HEK293 (cell line): ENCODE measurements at regions of chr3 and their contacts with region 1.

Region 1: DNA sequence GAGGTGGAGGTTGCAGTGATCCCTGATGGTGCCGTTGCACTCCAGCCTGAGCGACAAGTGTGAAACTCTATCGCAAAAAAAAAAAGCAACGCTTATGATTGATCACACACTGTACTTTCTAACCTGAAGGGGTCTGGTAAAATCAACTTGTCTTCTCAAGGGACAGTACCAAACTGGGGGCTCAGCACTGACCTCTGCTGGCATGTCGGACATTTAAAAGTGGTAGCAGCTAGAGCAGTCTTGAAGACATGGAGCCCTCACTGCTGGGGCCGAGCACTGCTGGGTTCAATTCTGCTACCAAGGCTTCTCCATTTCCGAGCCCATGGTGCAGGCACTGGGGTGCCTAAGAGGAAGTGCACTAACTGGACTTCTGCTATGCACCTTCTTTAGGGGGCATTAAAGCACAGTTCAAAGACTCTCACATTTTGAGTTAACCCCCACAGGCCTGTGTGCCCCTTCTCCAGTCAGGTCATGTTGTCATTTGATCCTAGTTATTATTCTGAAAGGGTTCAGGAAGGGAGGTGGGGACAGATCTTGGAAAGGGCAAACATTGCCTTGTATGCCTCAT is 26.4 kb upstream of the LAMP3 start:
- H3K4me3 ChIP-seq: no peak overlapping the region
- H3K27ac ChIP-seq: no peak overlapping the region
- H3K4me1 ChIP-seq: no peaks in the 10 kb centered on the region; the same call in 1 of the 2 replicates
- CTCF ChIP-seq: no peak

Region 2: DNA sequence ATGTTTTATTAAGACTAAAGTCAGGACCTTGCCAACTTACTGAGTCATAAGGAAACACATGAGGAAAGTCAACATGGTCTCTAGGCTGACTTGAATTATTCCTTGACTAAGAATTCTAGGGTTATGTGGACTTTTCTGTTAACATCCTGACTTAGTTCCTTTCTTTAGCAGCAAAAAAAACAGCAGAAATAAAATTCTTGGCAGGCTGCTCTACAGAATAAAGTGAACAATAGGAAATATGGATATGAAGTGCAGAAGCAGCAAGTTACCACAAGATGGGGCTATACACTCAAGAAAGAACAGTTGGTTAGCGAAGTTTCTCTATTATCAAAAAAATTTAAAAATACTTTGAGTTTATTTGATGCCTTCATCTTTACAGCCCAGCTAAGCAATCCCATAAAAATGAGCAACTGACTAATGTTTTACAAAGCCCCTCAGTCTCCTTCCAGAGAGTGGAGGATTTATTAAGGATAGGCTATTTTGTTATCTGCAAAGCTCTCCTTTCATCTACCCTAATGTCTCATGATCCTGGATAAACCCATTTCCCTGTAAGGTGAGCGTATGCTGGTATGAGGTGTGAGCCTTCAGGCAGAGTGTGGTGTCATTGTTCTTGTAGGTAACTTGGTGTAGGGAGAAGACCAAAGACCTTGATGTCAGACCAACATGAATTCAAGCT is 66.6 kb before region 1 on chr3:
- CTCF ChIA-PET with region 1: interaction called, 29 read pairs
- POLR2A ChIA-PET with region 1: no interaction called
- H3K4me3 ChIP-seq: no peak overlapping the region
- H3K27ac ChIP-seq: no peak overlapping the region
- H3K4me1 ChIP-seq: no peaks in the 10 kb centered on the region
- CTCF ChIP-seq: 0 out of 2 replicates have a peak, but pooled peaks have one; percentile 23

Region 3: GRCh38 chr3:183148056-183148455 is 40.9 kb before region 1 on chr3:
- CTCF ChIA-PET with region 1: no interaction called
- POLR2A ChIA-PET with region 1: no interaction called
- H3K4me3 ChIP-seq: no peak overlapping the region
- H3K27ac ChIP-seq: no peak overlapping the region
- H3K4me1 ChIP-seq: no peaks in the 10 kb centered on the region
- CTCF ChIP-seq: no peak

Region 4: DNA sequence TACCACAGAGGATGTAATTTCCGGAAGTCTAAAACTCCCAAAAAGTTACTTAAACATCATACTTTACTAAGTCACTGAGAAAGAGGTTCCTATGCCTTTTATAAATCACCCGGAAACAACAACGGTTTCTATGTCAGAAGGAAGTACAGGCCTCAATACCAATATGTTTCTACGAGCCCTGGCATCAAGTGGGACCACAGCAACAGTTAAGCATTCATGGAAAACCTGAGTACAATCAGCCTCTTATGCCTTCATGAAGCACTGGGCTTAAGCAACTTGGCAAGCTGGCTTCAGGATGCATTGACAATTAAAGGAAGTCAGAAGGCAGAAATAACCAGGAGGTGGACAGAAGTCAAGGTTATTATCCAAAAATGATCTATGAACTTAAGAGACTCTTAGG is 45.0 kb after region 1 on chr3:
- CTCF ChIA-PET with region 1: no interaction called
- POLR2A ChIA-PET with region 1: no interaction called
- H3K4me3 ChIP-seq: no peak overlapping the region
- H3K27ac ChIP-seq: no peak overlapping the region
- H3K4me1 ChIP-seq: no peaks in the 10 kb centered on the region
- CTCF ChIP-seq: no peak

Region 5: GRCh38 chr3:183385698-183386613 is 197.0 kb after region 1 on chr3:
- CTCF ChIA-PET with region 1: interaction called, 175 read pairs
- POLR2A ChIA-PET with region 1: interaction called, 10 read pairs
- H3K4me3 ChIP-seq: no peak overlapping the region
- H3K27ac ChIP-seq: no peak overlapping the region
- H3K4me1 ChIP-seq: no peaks in the 10 kb centered on the region
- CTCF ChIP-seq: no peak

Region 6: DNA sequence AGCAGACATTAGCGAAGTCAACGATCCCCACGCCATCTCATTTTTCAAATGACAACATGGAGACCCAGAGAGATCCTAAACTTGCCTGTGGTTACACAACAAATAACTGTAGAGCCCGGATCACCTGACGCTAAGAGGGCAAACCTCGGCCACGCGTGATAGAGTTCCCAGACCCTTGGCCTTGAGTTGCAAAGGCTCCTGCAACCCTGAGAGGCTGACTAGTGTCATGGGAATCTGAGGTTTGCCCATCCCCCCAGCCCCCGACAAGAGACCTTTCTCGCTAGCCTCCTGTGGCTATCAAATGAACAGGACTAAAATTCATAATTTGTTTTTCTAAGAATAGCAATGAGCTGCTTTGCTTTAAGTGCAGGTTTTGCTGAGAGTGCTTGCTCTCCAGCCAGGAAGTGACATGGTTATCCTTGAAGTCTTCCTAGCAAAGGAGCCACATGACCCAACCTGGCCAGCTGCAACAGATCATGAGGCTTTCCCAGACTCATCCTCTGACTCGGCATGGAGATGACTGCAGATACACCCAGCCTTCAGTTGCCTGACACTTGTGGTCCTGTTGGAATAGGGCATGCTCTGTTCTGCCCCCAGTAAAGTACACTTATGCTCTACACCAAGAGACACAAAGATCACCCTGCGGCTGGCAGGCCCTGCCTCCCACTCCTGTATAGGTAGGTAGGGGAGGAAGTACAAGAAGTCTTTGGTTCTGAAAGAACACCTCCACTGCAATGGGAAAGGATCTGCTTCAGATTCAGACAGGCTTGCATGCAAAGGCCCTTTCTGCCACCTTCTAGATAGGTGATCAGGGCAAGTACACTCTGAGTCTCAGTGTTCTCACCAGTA is 203.4 kb after region 1 on chr3:
- CTCF ChIA-PET with region 1: interaction called, 12 read pairs
- POLR2A ChIA-PET with region 1: no interaction called
- H3K4me3 ChIP-seq: no peak overlapping the region
- H3K27ac ChIP-seq: no peak overlapping the region
- H3K4me1 ChIP-seq: no peaks in the 10 kb centered on the region
- CTCF ChIP-seq: no peak

Region 7: GRCh38 chr3:183576487-183577107 is 387.6 kb after region 1 on chr3:
- CTCF ChIA-PET with region 1: no interaction called
- POLR2A ChIA-PET with region 1: no interaction called
- H3K4me3 ChIP-seq: no peak overlapping the region
- H3K27ac ChIP-seq: no peak overlapping the region
- H3K4me1 ChIP-seq: no peaks in the 10 kb centered on the region
- CTCF ChIP-seq: no peak

Region 8: DNA sequence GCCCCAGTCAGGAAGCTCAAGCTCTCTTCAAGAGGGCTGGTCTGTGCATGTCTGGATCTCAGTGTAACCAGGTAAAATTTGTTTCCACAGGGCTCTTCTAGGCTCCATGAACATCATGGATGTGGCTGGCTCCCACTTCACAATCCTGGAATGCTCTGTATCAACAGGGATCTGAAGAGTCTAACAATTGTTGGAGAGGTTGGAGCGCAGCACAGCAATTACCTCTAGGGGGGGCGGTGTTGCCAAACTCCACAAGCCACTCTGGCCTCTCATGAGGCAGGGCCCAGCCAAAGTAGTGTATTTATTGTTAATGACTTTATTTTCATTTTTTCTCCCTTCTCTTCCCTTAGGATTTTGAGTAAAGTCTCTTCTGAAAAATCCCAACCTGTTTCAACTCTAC is 940.0 kb after region 1 on chr3:
- CTCF ChIA-PET with region 1: no interaction called
- POLR2A ChIA-PET with region 1: no interaction called
- H3K4me3 ChIP-seq: no peak overlapping the region
- H3K27ac ChIP-seq: no peak overlapping the region
- H3K4me1 ChIP-seq: no peaks in the 10 kb centered on the region
- CTCF ChIP-seq: no peak